ENCODE measurements at regions of chr11 and their contacts with region 1.

Region 1: GRCh38 chr11:116787786-116788486 is at the start of gene ZPR1:
- DNase-seq: peak; percentile 91
- ATAC-seq: peak; percentile 89
- H3K4me3 Mint-ChIP-seq: peak within 1 kb of the TSS; percentile 82
- H3K27ac Mint-ChIP-seq: peak within 1 kb of the TSS; percentile 88
- H3K4me1 Mint-ChIP-seq: peaks cover 54% of the 10 kb centered on the region
- H3K27me3 Mint-ChIP-seq: peaks cover 2% of the 10 kb centered on the region
- total RNA-seq, gene ZPR1: 66.6 to 72.1 TPM

Region 2: GRCh38 chr11:116314006-116314405 is 473.9 kb before region 1 on chr11:
- CTCF ChIA-PET with region 1: no interaction called
- DNase-seq: no peak
- ATAC-seq: no peak
- H3K4me3 Mint-ChIP-seq: no peak overlapping the region
- H3K27ac Mint-ChIP-seq: no peak overlapping the region
- H3K4me1 Mint-ChIP-seq: no peaks in the 10 kb centered on the region
- H3K27me3 Mint-ChIP-seq: peaks cover 13% of the 10 kb centered on the region

Region 3: DNA sequence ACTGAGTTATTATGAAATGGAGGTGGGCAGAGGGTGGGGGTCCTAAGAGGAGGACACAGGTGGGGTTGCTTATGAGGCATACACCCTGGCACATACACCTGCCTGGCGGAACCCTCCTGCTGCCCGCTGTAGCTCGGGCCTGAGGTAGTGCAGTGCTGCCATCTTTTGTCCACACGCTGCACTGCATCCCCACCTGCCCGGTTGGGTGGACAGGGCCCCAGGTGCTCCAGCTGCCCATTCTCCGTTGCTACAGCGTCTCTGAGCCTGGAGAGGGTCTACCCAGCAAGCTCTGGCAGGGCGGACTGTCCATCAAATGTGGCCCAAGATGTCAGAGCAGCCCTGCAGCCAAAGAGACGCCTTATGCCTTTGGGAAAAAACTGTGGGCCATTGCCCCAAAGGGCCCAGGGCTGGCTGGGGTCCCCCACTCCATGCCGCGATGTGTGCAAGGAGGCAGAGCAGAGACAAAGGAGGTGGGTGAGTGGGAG is 146.3 kb before region 1 on chr11:
- CTCF ChIA-PET with region 1: no interaction called
- DNase-seq: peak; percentile 45
- ATAC-seq: peak; percentile 65
- H3K4me3 Mint-ChIP-seq: no peak overlapping the region
- H3K27ac Mint-ChIP-seq: no peak overlapping the region
- H3K4me1 Mint-ChIP-seq: no peaks in the 10 kb centered on the region
- H3K27me3 Mint-ChIP-seq: no peaks in the 10 kb centered on the region

Region 4: GRCh38 chr11:116800610-116801009 is 12.7 kb after region 1 on chr11:
- CTCF ChIA-PET with region 1: interaction called, 23 read pairs
- DNase-seq: no peak
- ATAC-seq: no peak
- H3K4me3 Mint-ChIP-seq: no peak overlapping the region
- H3K27ac Mint-ChIP-seq: no peak overlapping the region
- H3K4me1 Mint-ChIP-seq: peaks cover 3% of the 10 kb centered on the region
- H3K27me3 Mint-ChIP-seq: peaks cover 23% of the 10 kb centered on the region

Region 5: GRCh38 chr11:116821050-116821918 is 33.3 kb after region 1 on chr11:
- CTCF ChIA-PET with region 1: interaction called, 11 read pairs
- DNase-seq: no peak
- ATAC-seq: no peak
- H3K4me3 Mint-ChIP-seq: no peak overlapping the region
- H3K27ac Mint-ChIP-seq: no peak overlapping the region
- H3K4me1 Mint-ChIP-seq: no peaks in the 10 kb centered on the region
- H3K27me3 Mint-ChIP-seq: no peaks in the 10 kb centered on the region

Region 6: DNA sequence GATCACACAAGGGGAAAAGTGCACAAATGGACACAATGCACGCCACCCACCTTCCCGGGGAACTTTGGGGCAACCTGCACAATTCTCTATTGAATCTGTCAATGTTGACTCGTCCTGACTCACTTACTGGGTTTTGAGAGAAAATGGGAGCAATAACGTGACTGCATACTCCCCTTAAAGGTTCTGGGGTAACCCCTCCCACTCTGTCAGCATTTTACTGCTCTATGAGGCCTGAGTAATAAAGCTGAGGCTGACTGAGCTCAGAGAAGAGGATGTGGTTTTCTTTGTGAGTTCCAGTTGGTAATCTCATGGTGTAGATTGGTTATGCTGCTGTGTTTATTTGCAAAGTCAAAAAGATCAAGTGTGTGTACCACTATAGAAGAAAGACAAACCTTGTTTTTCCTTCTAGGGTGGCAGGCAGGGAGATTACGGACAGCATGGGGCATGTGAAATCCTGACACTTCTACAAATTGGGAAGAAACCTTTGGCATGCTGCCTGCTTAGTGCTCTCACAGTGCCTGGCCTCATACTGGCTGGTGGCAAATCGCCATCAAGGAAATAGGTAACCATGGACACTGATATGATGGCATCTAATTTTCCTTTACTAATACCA is 65.6 kb after region 1 on chr11:
- CTCF ChIA-PET with region 1: interaction called, 38 read pairs
- DNase-seq: peak; percentile 87
- ATAC-seq: peak; percentile 94
- H3K4me3 Mint-ChIP-seq: peak overlapping the region; percentile 67
- H3K27ac Mint-ChIP-seq: peak overlapping the region; percentile 94
- H3K4me1 Mint-ChIP-seq: peaks cover 62% of the 10 kb centered on the region
- H3K27me3 Mint-ChIP-seq: no peaks in the 10 kb centered on the region

Region 7: DNA sequence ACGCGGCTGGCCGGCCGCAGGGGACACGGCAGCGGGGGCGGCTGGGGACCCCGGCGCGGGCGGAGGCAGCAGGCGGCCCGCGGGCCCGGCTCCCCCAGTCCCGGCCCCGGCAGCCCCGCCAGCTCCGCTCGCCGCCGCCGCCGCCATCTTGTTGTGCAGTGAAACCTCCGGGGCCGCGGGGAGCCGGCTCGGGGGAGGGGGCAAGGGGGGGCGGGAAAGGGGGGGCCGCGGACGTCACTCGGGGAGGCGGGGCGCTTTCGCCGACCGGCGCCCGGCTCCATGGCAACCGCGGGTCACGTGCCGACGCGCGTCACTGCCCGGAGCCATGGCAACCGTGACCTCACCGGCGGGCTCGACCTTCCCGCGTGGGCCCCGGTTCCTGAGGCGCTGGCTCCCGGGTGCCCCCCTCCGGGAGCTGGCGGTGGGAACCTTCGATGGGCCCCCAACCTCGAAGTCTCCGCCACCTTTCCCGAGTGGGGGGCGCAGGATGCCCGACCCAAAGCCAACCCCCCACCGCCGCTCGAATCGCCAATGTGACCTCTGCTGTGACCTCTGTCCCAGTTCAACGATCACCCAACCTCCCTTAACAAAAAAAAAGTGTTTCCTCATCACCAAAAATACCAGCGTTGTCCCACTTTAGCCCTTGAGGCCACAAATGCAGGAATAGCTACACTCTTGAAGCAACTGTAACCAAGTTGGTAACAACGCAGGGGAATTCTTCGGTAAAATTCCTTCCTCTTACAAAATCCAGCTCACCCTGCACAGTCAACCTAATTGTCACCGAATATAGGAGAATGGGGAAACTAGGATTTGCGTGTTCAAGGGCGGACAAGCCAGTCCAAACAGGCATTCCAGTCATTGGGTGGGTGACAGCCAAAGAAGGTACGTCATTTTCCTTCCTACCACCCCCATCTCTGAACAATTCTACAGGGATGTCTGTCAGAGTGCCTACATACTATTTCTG is 310.6 kb after region 1 on chr11 and contains the start of gene SIK3:
- CTCF ChIA-PET with region 1: interaction called, 99 read pairs
- DNase-seq: peak; percentile 93
- ATAC-seq: peak; percentile 70
- H3K4me3 Mint-ChIP-seq: peak within 1 kb of the TSS; percentile 86
- H3K27ac Mint-ChIP-seq: peak within 1 kb of the TSS; percentile 90
- H3K4me1 Mint-ChIP-seq: peaks cover 43% of the 10 kb centered on the region
- H3K27me3 Mint-ChIP-seq: no peaks in the 10 kb centered on the region
- total RNA-seq, gene SIK3: 31.0 to 38.3 TPM

Region 8: GRCh38 chr11:117143871-117144476 is 356.0 kb after region 1 on chr11 and contains the start of gene PAFAH1B2:
- CTCF ChIA-PET with region 1: interaction called, 10 read pairs
- DNase-seq: peak; percentile 97
- ATAC-seq: peak; percentile 94
- H3K4me3 Mint-ChIP-seq: peak within 1 kb of the TSS; percentile 100
- H3K27ac Mint-ChIP-seq: peak within 1 kb of the TSS; percentile 88
- H3K4me1 Mint-ChIP-seq: peaks cover 39% of the 10 kb centered on the region
- H3K27me3 Mint-ChIP-seq: peaks cover 24% of the 10 kb centered on the region
- total RNA-seq, gene PAFAH1B2: 54.5 to 66.4 TPM

Measured in activated CD8-positive, alpha-beta memory T cell treated with anti-CD3 and anti-CD28 coated beads, Interleukin-2, amount 10 ng/mL, durations not matched to agents 7 days and 5 days (primary cell).